Activated CD8-positive, alpha-beta memory T cell treated with anti-CD3 and anti-CD28 coated beads, Interleukin-2, amount 10 ng/mL, durations not matched to agents 7 days and 5 days (primary cell): ENCODE measurements at regions of chr2 and their contacts with region 1.

Region 1: GRCh38 chr2:23824777-23825212 is 102.1 kb downstream of the ATAD2B start:
- DNase-seq: no peak
- ATAC-seq: peak; percentile 65
- H3K4me3 Mint-ChIP-seq: no peak overlapping the region
- H3K27ac Mint-ChIP-seq: no peak overlapping the region
- H3K4me1 Mint-ChIP-seq: peaks cover 7% of the 10 kb centered on the region
- H3K27me3 Mint-ChIP-seq: no peaks in the 10 kb centered on the region

Region 2: DNA sequence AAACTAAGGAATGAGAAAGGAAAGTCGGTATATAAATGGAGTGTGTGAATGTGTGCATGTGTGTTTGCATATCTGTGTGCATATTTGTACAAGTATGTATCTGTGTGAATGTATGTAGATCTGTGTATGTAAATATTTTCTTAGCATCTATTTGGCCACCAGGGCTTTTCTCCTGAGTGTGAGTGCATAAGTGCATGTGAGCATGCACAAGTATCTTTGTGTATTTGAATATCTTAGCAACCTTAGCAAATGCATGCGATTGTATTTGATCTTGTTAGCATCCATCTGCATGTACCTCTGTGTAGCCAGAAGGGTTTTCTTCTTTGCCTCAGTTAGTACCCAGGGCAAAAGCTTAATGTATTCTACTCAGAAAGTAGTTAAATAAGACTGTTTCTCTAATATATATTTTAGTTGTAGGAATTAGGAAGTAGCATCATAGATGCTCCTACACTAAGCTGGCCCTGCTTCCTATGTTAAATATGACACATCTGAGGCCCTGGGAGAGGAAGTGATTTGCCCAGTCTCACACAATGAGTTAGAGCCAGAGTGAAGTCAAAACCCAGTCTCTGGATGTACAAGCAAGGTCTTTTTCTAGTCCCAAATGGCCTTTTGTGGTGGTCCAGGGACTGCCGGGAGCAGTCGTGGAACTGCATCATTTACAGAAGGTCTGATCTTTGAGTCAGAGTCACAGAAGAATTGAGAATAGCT is 233.9 kb after region 1 on chr2:
- CTCF ChIA-PET with region 1: interaction called, 17 read pairs
- DNase-seq: no peak
- ATAC-seq: no peak
- H3K4me3 Mint-ChIP-seq: no peak overlapping the region
- H3K27ac Mint-ChIP-seq: no peak overlapping the region
- H3K4me1 Mint-ChIP-seq: peaks cover 6% of the 10 kb centered on the region
- H3K27me3 Mint-ChIP-seq: no peaks in the 10 kb centered on the region

Region 3: GRCh38 chr2:24164125-24164973 is 339.6 kb after region 1 on chr2:
- CTCF ChIA-PET with region 1: interaction called, 11 read pairs
- DNase-seq: peak; percentile 59
- ATAC-seq: peak; percentile 84
- H3K4me3 Mint-ChIP-seq: no peak overlapping the region
- H3K27ac Mint-ChIP-seq: no peak overlapping the region
- H3K4me1 Mint-ChIP-seq: no peaks in the 10 kb centered on the region
- H3K27me3 Mint-ChIP-seq: peaks cover 3% of the 10 kb centered on the region